OCI-LY7 (cell line): ENCODE measurements at regions of chr3 and their contacts with region 1.

Region 1: DNA sequence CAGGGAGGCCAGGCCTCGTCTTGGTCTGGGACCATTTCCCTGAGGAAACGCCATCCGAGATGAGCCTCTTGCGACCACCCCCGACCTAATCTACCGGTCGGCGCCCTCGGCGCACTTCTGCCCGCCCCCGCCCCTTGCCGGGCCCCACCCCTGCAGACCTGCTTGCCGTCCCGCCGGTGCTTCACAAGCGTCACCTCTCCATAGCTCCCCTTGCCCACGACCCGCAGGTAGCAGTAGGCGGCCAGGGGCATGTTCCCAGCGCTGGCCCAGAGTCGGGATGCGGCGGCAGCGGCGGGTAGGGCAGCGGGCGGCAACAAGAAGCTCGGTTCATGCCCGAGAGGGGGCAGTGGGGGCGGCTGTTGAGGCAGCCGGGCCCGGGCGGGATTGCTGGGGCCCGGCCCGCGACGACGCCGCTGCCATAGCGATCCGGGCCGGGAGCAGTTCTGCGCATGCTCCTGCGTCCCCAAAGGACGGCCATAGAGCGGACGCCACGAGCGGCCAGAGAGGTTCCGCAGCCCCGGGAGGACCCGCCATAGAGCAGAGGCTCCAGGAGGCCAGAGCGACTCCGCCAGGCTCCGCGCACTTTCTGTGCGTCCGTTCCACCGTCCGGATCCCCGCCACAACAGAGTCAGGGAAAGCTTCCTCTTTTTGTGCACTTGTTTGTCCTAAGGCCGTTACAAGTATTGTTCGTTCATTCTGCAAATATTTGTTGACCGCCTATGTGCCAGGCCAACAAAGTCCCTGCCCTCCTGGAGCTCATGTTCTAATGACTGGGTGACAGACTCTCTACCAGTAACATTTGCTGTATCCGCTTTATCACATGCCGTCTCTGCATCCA is at the start of gene NEK4:
- DNase-seq: peak; percentile 97
- H3K4me3 ChIP-seq: peak within 1 kb of the TSS; percentile 75
- H3K27ac ChIP-seq: peak within 1 kb of the TSS; percentile 74
- H3K4me1 ChIP-seq: peaks cover 19% of the 10 kb centered on the region
- CTCF ChIP-seq: no peak
- total RNA-seq, gene NEK4: 27.6 and 38.6 TPM in 2 replicates

Region 2: DNA sequence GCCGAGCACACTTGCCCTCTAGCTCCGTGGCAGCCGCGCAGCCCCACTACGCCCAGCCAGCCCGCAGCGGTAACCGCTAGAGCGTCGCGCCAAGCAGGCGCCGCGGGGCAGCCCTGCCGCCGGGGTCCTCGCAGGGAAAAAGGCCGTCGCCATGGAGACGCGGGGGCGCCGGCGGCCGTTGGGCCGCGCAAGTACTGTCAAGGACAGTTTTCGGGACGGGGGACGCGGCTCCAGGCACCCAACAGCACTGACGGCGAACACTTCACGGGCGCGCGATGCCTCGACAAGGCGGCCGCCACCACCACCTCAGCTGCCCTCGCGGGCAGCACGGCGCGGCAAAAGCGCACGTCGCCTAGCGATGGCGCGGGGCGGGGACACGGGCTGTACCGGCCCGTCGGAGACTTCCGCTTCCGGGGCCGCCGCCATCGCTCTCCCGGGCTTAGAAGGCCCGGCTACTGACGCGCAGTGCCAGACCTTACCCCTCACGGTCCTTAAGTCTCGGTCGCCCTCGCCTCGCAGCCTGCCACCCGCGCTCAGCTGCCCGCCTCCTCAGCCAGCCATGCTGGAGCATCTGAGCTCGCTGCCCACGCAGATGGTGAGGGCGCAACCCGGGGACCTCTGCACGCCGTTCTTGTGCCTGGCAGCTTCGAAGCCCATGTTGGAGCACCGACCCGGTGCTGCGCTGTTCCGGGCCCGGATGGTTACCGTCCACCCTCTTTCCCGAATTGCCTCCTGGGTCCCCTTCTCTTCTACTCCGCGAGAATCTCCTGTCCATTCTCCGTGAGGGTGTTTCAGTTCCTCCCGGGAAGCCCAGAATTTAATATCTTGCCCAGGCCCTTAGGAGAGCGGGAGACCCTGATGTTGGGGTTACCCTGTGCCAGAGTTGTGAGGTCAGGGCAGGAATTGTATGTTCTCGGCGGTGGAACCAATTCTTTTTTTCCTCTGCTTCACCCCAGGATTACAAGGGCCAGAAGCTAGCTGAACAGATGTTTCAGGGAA is 64.7 kb before region 1 on chr3 and contains the starts of genes GLT8D1 and SPCS1:
- CTCF ChIA-PET with region 1: no interaction called
- POLR2A ChIA-PET with region 1: interaction called, 11 read pairs
- intact Hi-C with region 1: loop called (anchors 1 kb)
- DNase-seq: peak; percentile 92
- H3K4me3 ChIP-seq: peak within 1 kb of the TSS; percentile 95
- H3K27ac ChIP-seq: peak within 1 kb of the TSS; percentile 63
- H3K4me1 ChIP-seq: peaks cover 47% of the 10 kb centered on the region
- CTCF ChIP-seq: no peak
- total RNA-seq, gene GLT8D1: 35.6 and 39.6 TPM in 2 replicates
- total RNA-seq, gene SPCS1: 46.6 and 58.1 TPM in 2 replicates